T-cell (primary cell): ENCODE measurements at regions of chr4 and their contacts with region 1.

Region 1: GRCh38 chr4:152500800-152501434 is 35.0 kb downstream of the FBXW7 start:
- DNase-seq: peak in 29 of 35 experiments; percentile 13 to 91 (median 44)
- ATAC-seq: peak; percentile 69 to 81 (median 79)
- H3K4me3 ChIP-seq: no peak overlapping the region
- H3K4me3 Mint-ChIP-seq: no peak overlapping the region
- H3K27ac ChIP-seq: no peak overlapping the region
- H3K27ac Mint-ChIP-seq: peak overlapping the region; percentile 56 to 70
- H3K4me1 ChIP-seq: peaks cover 0 to under 1% of the 10 kb centered on the region in 2 experiments
- H3K4me1 Mint-ChIP-seq: peaks cover 44 to 58% (median 49%) of the 10 kb centered on the region in 3 donors
- H3K27me3 ChIP-seq: no peaks in the 10 kb centered on the region
- H3K27me3 Mint-ChIP-seq: no peaks in the 10 kb centered on the region

Region 2: DNA sequence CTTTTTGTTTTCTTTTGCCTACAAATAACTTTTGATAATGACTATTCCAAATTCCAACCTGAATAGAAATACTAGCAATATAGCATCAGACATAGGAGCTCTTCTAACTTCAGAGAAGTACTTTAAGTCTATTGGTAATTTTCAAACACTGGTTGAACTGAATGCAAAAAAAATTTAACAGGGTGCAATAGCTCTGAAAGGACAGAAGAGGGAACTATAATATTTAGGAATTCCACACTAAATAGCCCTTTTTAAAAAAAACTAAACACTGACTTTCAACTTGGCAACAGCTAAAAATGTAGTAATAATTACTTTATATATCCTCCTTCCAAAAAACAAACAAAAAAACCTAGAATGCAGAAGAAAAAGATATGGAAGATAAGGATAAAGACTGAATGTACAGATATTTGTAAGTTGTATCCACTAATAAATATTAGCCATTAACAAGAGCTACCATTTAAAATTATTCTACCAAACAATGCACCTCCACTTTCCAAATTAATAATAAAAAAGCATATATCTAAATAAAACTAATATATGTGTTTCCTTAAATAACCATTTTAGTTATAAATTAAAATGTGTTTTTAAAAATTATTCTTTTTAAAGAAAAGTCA is 46.4 kb before region 1 on chr4:
- CTCF ChIA-PET with region 1: interaction called, 6 to 12 read pairs
- POLR2A ChIA-PET with region 1: no interaction called
- DNase-seq: peak in 1 of 35 experiments; percentile 11
- ATAC-seq: no peak
- H3K4me3 ChIP-seq: no peak overlapping the region
- H3K4me3 Mint-ChIP-seq: no peak overlapping the region
- H3K27ac ChIP-seq: no peak overlapping the region
- H3K27ac Mint-ChIP-seq: no peak overlapping the region
- H3K4me1 ChIP-seq: peaks cover 0 to 3% of the 10 kb centered on the region in 2 experiments
- H3K4me1 Mint-ChIP-seq: peaks cover 32 to 49% (median 39%) of the 10 kb centered on the region in 3 donors
- H3K27me3 ChIP-seq: no peaks in the 10 kb centered on the region
- H3K27me3 Mint-ChIP-seq: no peaks in the 10 kb centered on the region

Region 3: DNA sequence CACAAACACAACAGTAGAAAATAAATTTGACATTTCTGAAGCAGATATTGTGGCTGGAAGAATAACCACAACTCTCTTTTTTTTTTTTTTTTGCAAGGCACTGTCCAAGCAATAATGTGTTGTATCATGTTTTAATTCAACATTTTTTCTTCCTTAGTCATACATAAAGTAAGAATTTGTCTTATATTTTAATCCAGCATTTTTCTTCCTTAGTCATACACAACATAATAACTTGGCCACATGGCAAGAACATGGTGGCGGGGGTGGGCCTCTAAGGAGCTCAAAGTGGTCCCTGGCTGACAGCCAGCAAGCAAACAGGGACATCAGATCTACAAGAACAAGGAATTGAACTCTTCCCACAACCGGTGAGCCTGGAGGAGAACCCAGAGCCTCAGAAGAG is 14.8 kb after region 1 on chr4:
- CTCF ChIA-PET with region 1: interaction called, 9 to 14 read pairs
- POLR2A ChIA-PET with region 1: interaction called, 3 to 4 read pairs
- DNase-seq: no peak
- ATAC-seq: no peak
- H3K4me3 ChIP-seq: no peak overlapping the region
- H3K4me3 Mint-ChIP-seq: no peak overlapping the region
- H3K27ac ChIP-seq: no peak overlapping the region
- H3K27ac Mint-ChIP-seq: no peak overlapping the region
- H3K4me1 ChIP-seq: peaks cover 0 to 14% of the 10 kb centered on the region in 2 experiments
- H3K4me1 Mint-ChIP-seq: peaks cover 55 to 64% (median 63%) of the 10 kb centered on the region in 3 donors
- H3K27me3 ChIP-seq: no peaks in the 10 kb centered on the region
- H3K27me3 Mint-ChIP-seq: no peaks in the 10 kb centered on the region

Region 4: GRCh38 chr4:152535903-152536544 is 35.1 kb after region 1 on chr4 and contains the start of gene FBXW7:
- CTCF ChIA-PET with region 1: interaction called, 20 to 53 read pairs
- POLR2A ChIA-PET with region 1: interaction called, 7 read pairs
- DNase-seq: peak; percentile 99 to 100 (median 100)
- ATAC-seq: peak; percentile 85 to 86 (median 85)
- H3K4me3 ChIP-seq: peak within 1 kb of the TSS; percentile 88 to 93
- H3K4me3 Mint-ChIP-seq: peak within 1 kb of the TSS; percentile 97 to 98 (median 98)
- H3K27ac ChIP-seq: peak within 1 kb of the TSS; percentile 95
- H3K27ac Mint-ChIP-seq: peak within 1 kb of the TSS; percentile 97 to 100
- H3K4me1 ChIP-seq: peaks cover 33 to 41% of the 10 kb centered on the region in 2 experiments
- H3K4me1 Mint-ChIP-seq: peaks cover 67 to 80% (median 71%) of the 10 kb centered on the region in 3 donors
- H3K27me3 ChIP-seq: no peaks in the 10 kb centered on the region
- H3K27me3 Mint-ChIP-seq: no peaks in the 10 kb centered on the region
- total RNA-seq, gene FBXW7: 91.9 to 131 (median 96.0) TPM

Region 5: GRCh38 chr4:152634110-152634760 is 133.3 kb after region 1 on chr4:
- CTCF ChIA-PET with region 1: interaction called, 104 to 204 read pairs
- POLR2A ChIA-PET with region 1: interaction called in 1 of 2 experiments, 4 read pairs
- DNase-seq: no peak
- ATAC-seq: no peak
- H3K4me3 ChIP-seq: no peak overlapping the region
- H3K4me3 Mint-ChIP-seq: no peak overlapping the region
- H3K27ac ChIP-seq: no peak overlapping the region
- H3K27ac Mint-ChIP-seq: no peak overlapping the region
- H3K4me1 ChIP-seq: no peaks in the 10 kb centered on the region
- H3K4me1 Mint-ChIP-seq: peaks cover 0 to 4% (median 3%) of the 10 kb centered on the region in 3 donors
- H3K27me3 ChIP-seq: no peaks in the 10 kb centered on the region
- H3K27me3 Mint-ChIP-seq: no peaks in the 10 kb centered on the region

Region 6: GRCh38 chr4:152679414-152680281 is 178.7 kb after region 1 on chr4 and contains the start of gene TMEM154:
- CTCF ChIA-PET with region 1: interaction called in 1 of 2 experiments, 11 read pairs
- POLR2A ChIA-PET with region 1: no interaction called
- DNase-seq: peak; percentile 54 to 83 (median 67)
- ATAC-seq: peak; percentile 99 to 100 (median 100)
- H3K4me3 ChIP-seq: peak within 1 kb of the TSS; percentile 77 to 85
- H3K4me3 Mint-ChIP-seq: peak within 1 kb of the TSS; percentile 89 to 95 (median 92)
- H3K27ac ChIP-seq: peak within 1 kb of the TSS; percentile 77
- H3K27ac Mint-ChIP-seq: peak within 1 kb of the TSS; percentile 93 to 97
- H3K4me1 ChIP-seq: peaks cover 19% of the 10 kb centered on the region in 2 experiments
- H3K4me1 Mint-ChIP-seq: peaks cover 44 to 52% (median 49%) of the 10 kb centered on the region in 3 donors
- H3K27me3 ChIP-seq: peaks cover 0 to 6% of the 10 kb centered on the region in 2 experiments
- H3K27me3 Mint-ChIP-seq: no peaks in the 10 kb centered on the region
- total RNA-seq, gene TMEM154: 19.3 to 28.5 (median 24.6) TPM